ENCODE measurements at regions of chr20 and their contacts with region 1.

Region 1: DNA sequence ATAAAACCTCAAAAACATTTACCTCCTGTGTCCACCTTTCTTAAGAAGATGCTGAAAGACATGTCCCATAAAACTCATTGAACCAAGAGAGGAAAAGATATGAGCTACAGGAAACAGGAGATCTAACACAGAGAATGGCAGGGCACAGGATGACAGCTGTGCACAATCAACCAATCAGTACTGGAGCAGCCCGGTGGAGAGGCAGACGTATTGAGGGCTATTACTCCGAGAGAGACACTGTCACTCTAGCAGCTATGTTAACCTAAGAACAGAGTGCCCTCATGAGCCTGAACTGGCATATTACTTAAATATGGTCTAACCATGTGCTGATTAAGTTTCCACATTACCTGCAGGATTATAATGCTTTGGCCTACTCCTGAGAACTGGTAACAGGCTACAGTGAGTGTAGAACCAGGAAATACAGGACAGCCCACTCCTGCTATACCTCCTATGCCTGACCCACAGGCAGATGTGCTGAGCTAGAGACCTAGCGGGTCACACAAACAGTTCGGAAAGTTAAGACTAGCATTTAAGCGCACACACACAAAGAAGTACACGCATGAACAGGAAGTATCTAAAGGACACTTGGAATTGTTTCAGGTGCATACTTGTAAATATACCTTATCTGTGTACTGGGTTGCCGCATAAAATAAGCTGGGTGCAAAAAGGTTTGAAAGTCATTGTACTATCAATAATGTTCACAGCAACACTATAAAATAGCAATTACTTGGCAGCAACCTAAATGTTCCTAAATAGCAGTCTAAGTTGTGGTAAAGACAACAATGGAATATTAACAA is 199.3 kb upstream of the SHLD1 start:
- DNase-seq: no peak
- ATAC-seq: peak in 3 of 4 donors; percentile 54 to 64 (median 58)
- H3K4me3 ChIP-seq: no peak overlapping the region
- H3K27ac ChIP-seq: no peak overlapping the region
- H3K4me1 ChIP-seq: peaks cover 0 to 8% (median 0%) of the 10 kb centered on the region in 12 donors
- H3K27me3 ChIP-seq: no peaks in the 10 kb centered on the region
- CTCF ChIP-seq: no peak
- POLR2A ChIP-seq: no peak

Region 2: DNA sequence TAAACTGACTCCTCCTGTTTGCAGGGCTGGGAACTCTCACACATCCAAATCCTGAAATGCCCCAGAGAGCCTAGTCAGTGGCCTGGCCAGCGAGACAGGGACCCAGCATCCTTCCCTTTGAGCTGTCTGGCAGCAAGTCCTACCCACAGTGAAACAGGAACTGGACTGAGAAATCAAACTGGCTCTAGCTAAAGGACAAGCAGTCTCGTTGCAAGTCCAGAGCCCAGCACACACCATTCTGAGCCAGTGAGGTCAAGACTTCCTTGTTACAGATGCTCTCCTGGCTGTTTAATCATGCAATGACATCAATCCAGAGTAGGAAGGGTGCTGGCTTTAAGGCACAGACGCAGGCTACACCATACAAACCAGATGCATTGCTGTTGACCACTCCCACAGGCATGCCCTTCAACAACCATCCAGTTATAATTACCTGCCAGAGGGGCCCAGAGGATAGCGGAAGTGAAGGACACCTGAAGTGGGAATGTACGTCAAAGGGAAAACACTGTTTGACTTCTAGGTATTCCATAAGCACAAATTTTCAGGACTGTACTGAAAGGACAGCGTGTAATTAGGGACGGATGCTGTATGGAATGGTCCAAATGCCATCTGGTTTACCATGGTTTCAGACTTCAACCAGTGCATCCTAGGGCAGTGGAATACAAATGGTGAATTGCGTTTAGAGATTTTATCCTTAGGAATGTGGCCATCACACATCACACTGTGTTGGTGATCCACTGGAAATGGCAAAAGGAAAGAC is 664.0 kb before region 1 on chr20:
- intact Hi-C with region 1: no loop called
- DNase-seq: no peak
- ATAC-seq: peak in 3 of 4 donors; percentile 13 to 57 (median 49)
- H3K4me3 ChIP-seq: no peak overlapping the region
- H3K27ac ChIP-seq: no peak overlapping the region
- H3K4me1 ChIP-seq: no peaks in the 10 kb centered on the region
- H3K27me3 ChIP-seq: no peaks in the 10 kb centered on the region
- CTCF ChIP-seq: no peak
- POLR2A ChIP-seq: no peak

Region 3: GRCh38 chr20:4956200-4956810 is 594.6 kb before region 1 on chr20:
- intact Hi-C with region 1: no loop called
- DNase-seq: no peak
- ATAC-seq: no peak
- H3K4me3 ChIP-seq: no peak overlapping the region
- H3K27ac ChIP-seq: no peak overlapping the region
- H3K4me1 ChIP-seq: peaks cover 0 to 16% (median 1%) of the 10 kb centered on the region in 12 donors
- H3K27me3 ChIP-seq: no peaks in the 10 kb centered on the region
- CTCF ChIP-seq: peak; percentile 73 to 89 (median 83)
- POLR2A ChIP-seq: no peak

Region 4: DNA sequence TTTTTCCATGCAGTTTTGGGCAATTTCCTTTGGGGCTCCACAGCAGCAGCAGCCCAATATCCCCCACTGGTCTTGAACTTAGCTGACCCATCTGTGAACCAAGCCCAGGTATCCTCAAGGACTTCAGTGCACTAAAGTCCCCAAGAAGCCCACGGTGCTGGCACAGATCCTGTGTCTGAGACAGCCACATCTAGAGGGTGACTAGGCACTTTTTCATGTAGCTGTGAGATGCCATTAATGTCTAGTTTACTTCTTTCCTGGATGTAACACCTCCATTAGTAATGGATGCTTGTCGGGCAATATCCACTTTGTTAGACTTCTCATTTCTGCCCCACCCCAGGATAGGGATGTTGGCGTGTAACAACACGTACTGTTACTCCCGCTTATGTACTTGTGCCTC is 58.0 kb before region 1 on chr20:
- intact Hi-C with region 1: no loop called
- DNase-seq: no peak
- ATAC-seq: no peak
- H3K4me3 ChIP-seq: no peak overlapping the region
- H3K27ac ChIP-seq: no peak overlapping the region
- H3K4me1 ChIP-seq: no peaks in the 10 kb centered on the region
- H3K27me3 ChIP-seq: no peaks in the 10 kb centered on the region
- CTCF ChIP-seq: no peak
- POLR2A ChIP-seq: no peak

Region 5: GRCh38 chr20:5608442-5609161 is 57.7 kb after region 1 on chr20:
- intact Hi-C with region 1: loop called in 1 of 10 experiments (anchors 2 kb)
- DNase-seq: no peak
- ATAC-seq: no peak
- H3K4me3 ChIP-seq: peak overlapping the region in 10 of 12 donors; percentile 1 to 90 (median 82)
- H3K27ac ChIP-seq: peak overlapping the region in 7 of 12 donors; percentile 94 to 98 (median 96)
- H3K4me1 ChIP-seq: peaks cover 0 to 61% (median 27%) of the 10 kb centered on the region in 12 donors
- H3K27me3 ChIP-seq: no peaks in the 10 kb centered on the region
- CTCF ChIP-seq: no peak
- POLR2A ChIP-seq: no peak

Measured in heart left ventricle (tissue), 16 donors.